Caco-2 (cell line): ENCODE measurements at regions of chr12 and their contacts with region 1.

Region 1: GRCh38 chr12:64392221-64392620 is 1.7 kb upstream of the C12orf56 start:
- DNase-seq: peak in 1 of 2 experiments; percentile 31
- H3K4me3 ChIP-seq: no peak overlapping the region
- H3K4me3 Mint-ChIP-seq: no peak overlapping the region
- H3K27ac Mint-ChIP-seq: no peak overlapping the region
- H3K4me1 ChIP-seq: no peaks in the 10 kb centered on the region
- H3K4me1 Mint-ChIP-seq: no peaks in the 10 kb centered on the region
- H3K27me3 ChIP-seq: no peaks in the 10 kb centered on the region
- H3K27me3 Mint-ChIP-seq: no peaks in the 10 kb centered on the region
- CTCF ChIP-seq: peak; percentile 18 to 25

Region 2: DNA sequence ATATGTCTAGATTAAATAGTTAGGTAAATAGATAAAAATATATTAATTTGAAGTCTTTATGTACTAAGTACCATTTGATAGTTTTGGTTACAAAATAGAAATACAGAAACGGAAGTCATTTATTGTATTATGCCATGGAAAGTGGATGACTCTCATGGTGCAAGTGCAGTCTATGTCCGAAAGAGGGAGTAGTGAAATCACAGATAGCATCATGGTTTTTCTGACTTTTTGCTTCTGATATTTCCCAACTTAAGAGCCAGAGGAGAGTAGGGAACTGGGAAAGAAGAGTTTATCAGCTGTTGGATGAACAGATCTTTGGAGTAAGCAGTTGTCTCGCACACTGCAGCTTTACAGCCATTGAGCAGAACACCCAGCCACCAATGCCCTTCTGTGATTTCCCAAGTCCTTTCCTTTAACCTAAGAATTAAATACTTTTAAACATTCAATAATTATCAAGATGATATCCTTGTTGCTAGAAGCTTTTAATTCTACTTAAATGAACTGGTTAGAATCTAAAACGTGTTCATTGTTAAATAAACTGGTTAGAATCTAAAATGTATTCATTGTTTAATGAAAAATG is 566.1 kb before region 1 on chr12:
- CTCF ChIA-PET with region 1: no interaction called
- POLR2A ChIA-PET with region 1: no interaction called
- intact Hi-C with region 1: loop called (anchors 2 kb)
- DNase-seq: peak in 1 of 2 experiments; percentile 35
- H3K4me3 ChIP-seq: no peak overlapping the region
- H3K4me3 Mint-ChIP-seq: no peak overlapping the region
- H3K27ac Mint-ChIP-seq: no peak overlapping the region
- H3K4me1 ChIP-seq: peaks cover 10% of the 10 kb centered on the region
- H3K4me1 Mint-ChIP-seq: peaks cover 9% of the 10 kb centered on the region
- H3K27me3 ChIP-seq: no peaks in the 10 kb centered on the region
- H3K27me3 Mint-ChIP-seq: no peaks in the 10 kb centered on the region
- CTCF ChIP-seq: peak; percentile 68 to 79

Region 3: GRCh38 chr12:64273527-64274403 is 118.5 kb before region 1 on chr12:
- CTCF ChIA-PET with region 1: no interaction called
- POLR2A ChIA-PET with region 1: interaction called, 7 read pairs
- intact Hi-C with region 1: loop called (anchors 1 kb)
- DNase-seq: peak in 1 of 2 experiments; percentile 30
- H3K4me3 ChIP-seq: no peak overlapping the region
- H3K4me3 Mint-ChIP-seq: no peak overlapping the region
- H3K27ac Mint-ChIP-seq: no peak overlapping the region
- H3K4me1 ChIP-seq: no peaks in the 10 kb centered on the region
- H3K4me1 Mint-ChIP-seq: no peaks in the 10 kb centered on the region
- H3K27me3 ChIP-seq: no peaks in the 10 kb centered on the region
- H3K27me3 Mint-ChIP-seq: no peaks in the 10 kb centered on the region
- CTCF ChIP-seq: peak; percentile 30 to 41

Region 4: GRCh38 chr12:64357325-64357724 is 34.9 kb before region 1 on chr12:
- CTCF ChIA-PET with region 1: no interaction called
- POLR2A ChIA-PET with region 1: no interaction called
- intact Hi-C with region 1: no loop called
- DNase-seq: no peak
- H3K4me3 ChIP-seq: no peak overlapping the region
- H3K4me3 Mint-ChIP-seq: no peak overlapping the region
- H3K27ac Mint-ChIP-seq: no peak overlapping the region
- H3K4me1 ChIP-seq: peaks cover 7% of the 10 kb centered on the region
- H3K4me1 Mint-ChIP-seq: no peaks in the 10 kb centered on the region
- H3K27me3 ChIP-seq: no peaks in the 10 kb centered on the region
- H3K27me3 Mint-ChIP-seq: no peaks in the 10 kb centered on the region
- CTCF ChIP-seq: no peak